ENCODE measurements at regions of chr10 and their contacts with region 1.

Region 1: GRCh38 chr10:32256613-32257437 is 90.1 kb downstream of the EPC1 start:
- DNase-seq: peak; percentile 79
- H3K4me3 ChIP-seq: peak overlapping the region; percentile 20
- H3K27ac ChIP-seq: no peak overlapping the region
- H3K4me1 ChIP-seq: peaks cover 7% of the 10 kb centered on the region
- CTCF ChIP-seq: peak; percentile 98

Region 2: DNA sequence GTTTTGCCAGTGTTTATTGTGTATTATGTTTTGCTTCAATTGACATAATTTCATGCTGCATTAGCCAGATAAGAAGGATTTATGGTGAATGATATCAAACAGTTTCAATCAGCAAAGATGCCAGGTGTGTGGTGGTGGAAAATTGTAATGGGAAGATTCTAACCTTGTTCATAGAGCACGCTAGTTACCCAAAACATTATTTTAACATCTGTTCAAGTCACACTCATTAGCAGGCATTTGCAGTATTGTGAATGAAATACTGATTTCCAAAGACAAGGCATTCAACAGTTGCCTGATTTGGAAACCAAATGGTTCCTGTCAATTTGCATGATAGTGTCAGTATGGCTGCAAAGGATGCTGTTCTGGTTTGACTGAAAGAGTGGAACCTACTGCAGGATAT is 39.6 kb before region 1 on chr10:
- CTCF ChIA-PET with region 1: no interaction called
- POLR2A ChIA-PET with region 1: no interaction called
- intact Hi-C with region 1: no loop called
- DNase-seq: no peak
- H3K4me3 ChIP-seq: no peak overlapping the region
- H3K27ac ChIP-seq: no peak overlapping the region
- H3K4me1 ChIP-seq: no peaks in the 10 kb centered on the region
- CTCF ChIP-seq: no peak

Region 3: DNA sequence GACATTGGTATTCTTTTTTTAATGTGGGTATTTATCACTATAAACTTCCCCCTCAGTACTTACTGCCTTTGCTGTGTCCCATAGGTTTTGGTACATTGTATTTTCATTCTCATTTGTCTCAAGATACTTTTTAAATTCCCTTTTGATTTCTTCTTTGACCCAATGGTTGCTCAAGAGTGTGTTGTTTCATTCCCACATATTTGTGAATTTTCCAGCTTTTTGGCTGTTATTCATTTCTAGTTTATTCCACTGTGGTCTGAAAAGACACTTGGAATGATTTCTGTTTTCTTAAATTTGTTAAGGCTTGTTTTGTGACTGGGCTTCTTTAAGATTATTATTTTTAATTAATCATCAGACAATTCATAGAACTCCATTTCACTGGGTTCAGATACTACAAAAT is 14.9 kb before region 1 on chr10:
- CTCF ChIA-PET with region 1: interaction called, 3 read pairs
- POLR2A ChIA-PET with region 1: interaction called, 14 read pairs
- intact Hi-C with region 1: no loop called
- DNase-seq: no peak
- H3K4me3 ChIP-seq: no peak overlapping the region
- H3K27ac ChIP-seq: no peak overlapping the region
- H3K4me1 ChIP-seq: no peaks in the 10 kb centered on the region
- CTCF ChIP-seq: no peak

Region 4: DNA sequence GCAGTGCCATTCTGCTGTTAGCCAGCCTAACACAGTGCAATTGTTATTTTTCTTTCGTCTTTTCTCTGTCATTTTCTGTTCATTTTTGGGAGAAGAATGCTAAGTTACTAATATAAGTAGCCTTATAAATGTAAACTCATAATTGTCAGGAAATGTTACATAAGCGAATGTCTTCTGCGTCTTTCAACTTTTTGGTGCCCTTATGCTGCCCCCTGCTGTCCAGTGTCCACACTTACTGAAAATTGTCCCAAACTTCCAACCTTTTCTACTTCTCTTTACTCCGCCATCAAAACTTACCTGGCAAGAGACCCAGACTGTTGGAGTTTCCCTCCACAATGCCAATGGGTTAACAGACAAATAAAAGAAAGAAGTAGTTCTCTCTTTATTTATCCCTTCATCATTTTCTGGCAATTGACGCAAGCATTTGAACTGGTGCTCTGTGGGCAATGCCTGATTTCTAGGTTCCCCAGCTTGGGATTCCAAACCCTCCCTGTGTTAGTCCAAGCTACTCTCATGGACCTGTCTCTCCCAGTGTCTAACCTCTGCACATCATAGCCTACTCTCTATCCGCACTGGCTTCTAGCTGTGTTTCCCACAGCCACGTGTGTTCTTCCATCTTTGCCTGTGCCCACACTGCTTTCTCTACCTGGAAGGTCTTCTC is 111.1 kb after region 1 on chr10:
- CTCF ChIA-PET with region 1: interaction called, 3 read pairs
- POLR2A ChIA-PET with region 1: interaction called, 11 read pairs
- intact Hi-C with region 1: loop called (anchors 1 kb)
- DNase-seq: peak; percentile 72
- H3K4me3 ChIP-seq: no peak overlapping the region
- H3K27ac ChIP-seq: no peak overlapping the region
- H3K4me1 ChIP-seq: peaks cover 11% of the 10 kb centered on the region
- CTCF ChIP-seq: peak; percentile 93

Region 5: GRCh38 chr10:32445740-32446535 is 189.1 kb after region 1 on chr10 and contains the start of gene CCDC7:
- CTCF ChIA-PET with region 1: no interaction called
- POLR2A ChIA-PET with region 1: interaction called, 3 read pairs
- intact Hi-C with region 1: loop called (anchors 2 kb)
- DNase-seq: peak; percentile 93
- H3K4me3 ChIP-seq: peak within 1 kb of the TSS; percentile 79
- H3K27ac ChIP-seq: peak within 1 kb of the TSS; percentile 66
- H3K4me1 ChIP-seq: peaks cover 8% of the 10 kb centered on the region
- CTCF ChIP-seq: peak; percentile 72
- total RNA-seq, gene CCDC7: 9.8 and 10.9 TPM in 2 replicates

Region 6: DNA sequence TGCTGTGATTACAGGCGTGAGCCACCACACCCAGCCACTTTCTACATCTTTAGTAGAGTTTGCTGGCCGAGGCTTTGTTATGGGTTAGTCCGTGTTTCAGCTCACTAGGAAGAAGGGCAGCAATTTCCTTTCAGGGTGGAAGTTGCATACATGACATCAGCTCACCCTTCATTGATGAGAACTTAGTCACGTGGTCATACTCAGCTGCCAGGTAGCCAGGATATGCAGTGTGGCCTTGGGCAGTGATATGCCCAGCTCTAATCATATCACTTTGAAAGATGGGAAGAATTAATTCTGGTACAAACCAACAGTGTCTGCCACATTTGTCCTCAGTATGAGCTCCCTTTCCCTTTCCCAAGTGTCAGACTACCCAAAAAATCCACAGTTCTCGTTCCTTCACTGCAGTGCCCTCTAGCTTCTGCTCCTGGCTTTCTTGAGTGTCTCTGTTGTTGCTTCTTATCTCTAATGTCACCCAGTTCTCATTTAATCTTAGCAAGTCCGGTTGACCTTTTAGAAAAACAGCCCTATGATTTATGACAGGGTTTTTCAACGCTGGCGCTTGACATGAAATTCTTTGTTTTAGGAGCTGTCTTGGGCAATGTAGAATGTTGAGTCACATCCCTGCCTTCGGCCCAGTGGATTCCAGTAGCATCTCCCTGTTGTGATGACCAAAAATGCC is 809.9 kb after region 1 on chr10:
- CTCF ChIA-PET with region 1: no interaction called
- POLR2A ChIA-PET with region 1: no interaction called
- intact Hi-C with region 1: no loop called
- DNase-seq: no peak
- H3K4me3 ChIP-seq: no peak overlapping the region
- H3K27ac ChIP-seq: no peak overlapping the region
- H3K4me1 ChIP-seq: no peaks in the 10 kb centered on the region
- CTCF ChIP-seq: 0 out of 2 replicates have a peak, but pooled peaks have one; percentile 28

Measured in OCI-LY7 (cell line).